ENCODE measurements at regions of chr14 and their contacts with region 1.

Region 1: GRCh38 chr14:67446120-67447032 is 34.4 kb upstream of the PLEK2 start:
- DNase-seq: no peak
- H3K4me3 ChIP-seq: no peak overlapping the region
- H3K27ac ChIP-seq: no peak overlapping the region
- H3K4me1 ChIP-seq: peaks cover 33% of the 10 kb centered on the region
- H3K27me3 ChIP-seq: no peaks in the 10 kb centered on the region
- CTCF ChIP-seq: no peak

Region 2: GRCh38 chr14:67396501-67396900 is 49.9 kb before region 1 on chr14:
- CTCF ChIA-PET with region 1: no interaction called
- dilution Hi-C with region 1: no loop called
- in situ Hi-C with region 1: no loop called
- intact Hi-C with region 1: no loop called
- DNase-seq: no peak
- H3K4me3 ChIP-seq: no peak overlapping the region
- H3K27ac ChIP-seq: no peak overlapping the region
- H3K4me1 ChIP-seq: no peaks in the 10 kb centered on the region
- H3K27me3 ChIP-seq: no peaks in the 10 kb centered on the region
- CTCF ChIP-seq: no peak

Region 3: DNA sequence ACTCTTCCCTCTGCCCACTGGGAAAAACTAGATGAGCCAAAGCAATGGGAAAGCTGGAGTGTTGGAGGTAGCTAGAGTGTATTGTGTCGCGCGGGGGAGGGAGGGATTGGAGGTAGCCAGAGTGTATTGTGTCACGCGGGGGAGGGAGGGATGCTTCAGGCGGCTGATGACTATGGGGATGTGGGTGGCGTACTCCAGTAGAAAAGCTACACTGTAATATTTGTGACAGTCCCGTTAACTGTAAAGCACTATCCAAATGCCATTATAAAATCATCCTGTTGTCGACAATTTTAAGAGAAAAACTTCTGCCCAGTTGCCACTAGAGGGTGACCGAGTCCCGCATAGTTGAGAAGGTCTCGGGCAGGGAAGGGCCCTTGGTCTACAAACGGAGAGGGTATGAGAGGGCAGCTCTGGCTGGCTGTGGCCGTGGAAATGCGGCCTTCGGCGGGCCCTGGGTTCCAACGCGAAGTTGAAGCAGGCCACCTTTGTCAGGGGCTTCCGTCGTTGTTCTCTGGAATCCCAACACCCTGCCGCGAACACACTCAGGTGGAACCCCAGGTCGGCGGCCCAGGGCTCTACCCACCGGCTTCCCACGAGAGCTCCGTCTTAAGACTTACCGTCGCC is 19.3 kb before region 1 on chr14:
- CTCF ChIA-PET with region 1: no interaction called
- dilution Hi-C with region 1: no loop called
- in situ Hi-C with region 1: no loop called
- intact Hi-C with region 1: no loop called
- DNase-seq: peak; percentile 66
- H3K4me3 ChIP-seq: no peak overlapping the region
- H3K27ac ChIP-seq: no peak overlapping the region
- H3K4me1 ChIP-seq: peaks cover 12% of the 10 kb centered on the region
- H3K27me3 ChIP-seq: no peaks in the 10 kb centered on the region
- CTCF ChIP-seq: peak; percentile 75 to 84

Region 4: GRCh38 chr14:67526676-67527459 is 80.5 kb after region 1 on chr14:
- CTCF ChIA-PET with region 1: interaction called, 20 read pairs
- dilution Hi-C with region 1: loop called (anchors 5 kb)
- in situ Hi-C with region 1: no loop called
- intact Hi-C with region 1: no loop called
- DNase-seq: peak; percentile 51
- H3K4me3 ChIP-seq: no peak overlapping the region
- H3K27ac ChIP-seq: no peak overlapping the region
- H3K4me1 ChIP-seq: peaks cover 6% of the 10 kb centered on the region
- H3K27me3 ChIP-seq: no peaks in the 10 kb centered on the region
- CTCF ChIP-seq: peak; percentile 73 to 82

Region 5: GRCh38 chr14:67532998-67533753 is 86.8 kb after region 1 on chr14 and contains the start of gene PLEKHH1:
- CTCF ChIA-PET with region 1: no interaction called
- dilution Hi-C with region 1: loop called (anchors 5 kb)
- in situ Hi-C with region 1: no loop called
- intact Hi-C with region 1: no loop called
- DNase-seq: peak; percentile 72
- H3K4me3 ChIP-seq: peak within 1 kb of the TSS; percentile 55 to 70 (median 64)
- H3K27ac ChIP-seq: no peak within 1 kb of the TSS
- H3K4me1 ChIP-seq: peaks cover 7% of the 10 kb centered on the region
- H3K27me3 ChIP-seq: no peaks in the 10 kb centered on the region
- CTCF ChIP-seq: no peak
- total RNA-seq, gene PLEKHH1: 6.7 to 11.9 TPM

Measured in mammary epithelial cell (primary cell).